Caco-2 (cell line): ENCODE measurements at regions of chr1 and their contacts with region 1.

Region 1: DNA sequence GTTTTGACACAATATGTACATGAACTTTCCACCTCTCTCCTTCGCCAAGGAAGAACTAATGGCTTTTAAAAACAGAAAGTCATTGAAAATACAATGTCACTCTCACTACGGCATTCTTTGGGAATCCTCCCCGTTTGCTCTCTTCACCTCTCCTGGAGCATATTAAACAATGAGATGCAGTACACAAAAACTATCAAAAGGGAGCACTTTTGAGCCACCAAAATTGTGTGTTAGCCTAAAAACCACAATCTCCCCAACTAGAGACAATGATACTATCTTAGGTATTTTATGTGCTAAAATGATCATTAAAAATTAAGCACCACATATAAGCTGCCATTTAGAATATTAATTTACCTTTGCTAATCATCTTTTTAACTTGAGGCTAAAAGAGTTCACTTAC is 425.5 kb downstream of the KCTD3 start:
- DNase-seq: peak in 1 of 2 experiments; percentile 24
- H3K4me3 ChIP-seq: no peak overlapping the region
- H3K4me3 Mint-ChIP-seq: no peak overlapping the region
- H3K27ac Mint-ChIP-seq: no peak overlapping the region
- H3K4me1 ChIP-seq: no peaks in the 10 kb centered on the region
- H3K4me1 Mint-ChIP-seq: peaks cover 13% of the 10 kb centered on the region
- H3K27me3 ChIP-seq: no peaks in the 10 kb centered on the region
- H3K27me3 Mint-ChIP-seq: no peaks in the 10 kb centered on the region
- CTCF ChIP-seq: peak; percentile 23 to 35

Region 2: DNA sequence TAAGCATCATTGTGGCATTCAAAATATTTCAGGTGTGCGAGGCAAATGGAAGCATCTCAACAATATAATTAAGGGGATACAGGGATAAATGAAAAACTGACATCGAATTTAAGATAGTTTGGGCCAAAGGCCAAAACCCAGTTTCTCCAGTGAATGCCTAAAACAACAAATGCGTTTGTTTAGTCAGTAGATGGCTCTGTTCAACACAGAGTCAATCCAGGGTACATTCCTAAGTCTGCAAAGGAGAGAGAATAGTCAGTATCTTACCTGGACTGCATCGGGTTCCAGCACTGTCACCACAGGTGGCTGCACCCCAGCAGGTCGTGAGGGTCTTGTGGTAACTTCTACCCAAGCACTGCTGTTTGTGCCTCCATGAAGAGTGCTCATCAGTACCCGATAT is 104.5 kb before region 1 on chr1:
- CTCF ChIA-PET with region 1: no interaction called
- POLR2A ChIA-PET with region 1: no interaction called
- intact Hi-C with region 1: loop called (anchors 5 kb)
- DNase-seq: peak in 1 of 2 experiments; percentile 28
- H3K4me3 ChIP-seq: no peak overlapping the region
- H3K4me3 Mint-ChIP-seq: no peak overlapping the region
- H3K27ac Mint-ChIP-seq: no peak overlapping the region
- H3K4me1 ChIP-seq: 0 out of 2 replicates have a peak, but pooled peaks cover 7% of the 10 kb centered on the region
- H3K4me1 Mint-ChIP-seq: peaks cover 7% of the 10 kb centered on the region
- H3K27me3 ChIP-seq: no peaks in the 10 kb centered on the region
- H3K27me3 Mint-ChIP-seq: no peaks in the 10 kb centered on the region
- CTCF ChIP-seq: no peak

Region 3: GRCh38 chr1:215905493-215906115 is 87.0 kb before region 1 on chr1:
- CTCF ChIA-PET with region 1: no interaction called
- POLR2A ChIA-PET with region 1: no interaction called
- intact Hi-C with region 1: no loop called
- DNase-seq: no peak
- H3K4me3 ChIP-seq: no peak overlapping the region
- H3K4me3 Mint-ChIP-seq: no peak overlapping the region
- H3K27ac Mint-ChIP-seq: no peak overlapping the region
- H3K4me1 ChIP-seq: no peaks in the 10 kb centered on the region
- H3K4me1 Mint-ChIP-seq: no peaks in the 10 kb centered on the region
- H3K27me3 ChIP-seq: no peaks in the 10 kb centered on the region
- H3K27me3 Mint-ChIP-seq: no peaks in the 10 kb centered on the region
- CTCF ChIP-seq: no peak

Region 4: DNA sequence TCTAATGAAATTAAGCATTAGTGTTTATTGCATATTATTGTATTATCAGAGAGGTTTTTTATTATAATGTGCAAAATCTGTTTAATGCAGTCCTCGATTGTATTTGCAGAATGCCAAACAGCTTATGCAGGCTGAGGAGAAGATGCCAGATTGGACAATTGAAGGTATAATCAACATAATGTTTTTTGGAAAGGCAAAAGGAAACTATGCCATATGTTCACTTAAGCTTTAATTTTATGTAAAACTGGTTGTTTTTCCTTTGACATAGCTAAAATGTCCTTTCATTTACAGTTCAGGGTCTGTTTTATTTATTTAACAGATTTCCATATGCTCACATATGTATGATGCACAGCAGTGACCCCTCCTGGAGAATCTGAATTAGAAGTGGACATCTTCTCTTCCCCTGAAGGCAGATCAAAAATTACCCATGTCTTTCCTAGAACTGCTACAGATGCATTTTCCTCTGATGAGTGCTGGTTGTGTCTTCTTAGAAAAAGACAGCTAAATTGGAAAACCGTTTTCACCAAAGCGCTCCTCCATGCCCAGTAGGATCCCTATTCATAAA is 574.1 kb after region 1 on chr1:
- CTCF ChIA-PET with region 1: no interaction called
- POLR2A ChIA-PET with region 1: no interaction called
- intact Hi-C with region 1: loop called (anchors 10 kb)
- DNase-seq: peak in 1 of 2 experiments; percentile 14
- H3K4me3 ChIP-seq: no peak overlapping the region
- H3K4me3 Mint-ChIP-seq: no peak overlapping the region
- H3K27ac Mint-ChIP-seq: no peak overlapping the region
- H3K4me1 ChIP-seq: no peaks in the 10 kb centered on the region
- H3K4me1 Mint-ChIP-seq: no peaks in the 10 kb centered on the region
- H3K27me3 ChIP-seq: no peaks in the 10 kb centered on the region
- H3K27me3 Mint-ChIP-seq: no peaks in the 10 kb centered on the region
- CTCF ChIP-seq: peak; percentile 39 to 42